ENCODE measurements at regions of chr18 and their contacts with region 1.

Region 1: GRCh38 chr18:59899298-59900221 is at the start of gene PMAIP1:
- DNase-seq: peak; percentile 81
- H3K4me3 ChIP-seq: peak within 1 kb of the TSS; percentile 87
- H3K27ac ChIP-seq: peak within 1 kb of the TSS; percentile 81
- H3K4me1 ChIP-seq: peaks cover 31% of the 10 kb centered on the region
- CTCF ChIP-seq: no peak
- total RNA-seq, gene PMAIP1: 22.9 and 25.4 TPM in 2 replicates

Region 2: DNA sequence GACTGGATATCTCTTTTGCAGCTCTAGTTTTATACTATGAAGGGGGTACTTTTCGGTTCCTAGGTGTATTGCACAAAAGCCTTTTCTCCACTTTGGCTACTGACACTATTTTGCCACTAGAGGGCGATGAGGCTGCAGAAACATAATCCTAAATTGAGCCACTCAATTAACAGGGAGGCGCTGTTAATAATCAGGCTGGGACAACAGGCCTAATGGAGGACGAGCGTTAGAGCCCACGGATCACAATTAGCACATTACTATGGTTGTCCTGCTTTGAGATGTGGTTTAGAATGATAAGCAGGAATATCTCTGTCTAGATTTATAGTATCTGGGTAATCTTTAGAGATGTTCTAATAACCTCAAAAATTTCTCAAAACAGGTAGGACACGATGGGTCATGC is 62.0 kb before region 1 on chr18:
- CTCF ChIA-PET with region 1: no interaction called
- POLR2A ChIA-PET with region 1: no interaction called
- intact Hi-C with region 1: loop called (anchors 2 kb)
- DNase-seq: peak; percentile 72
- H3K4me3 ChIP-seq: no peak overlapping the region
- H3K27ac ChIP-seq: no peak overlapping the region
- H3K4me1 ChIP-seq: peaks cover 5% of the 10 kb centered on the region
- CTCF ChIP-seq: peak; percentile 87

Region 3: DNA sequence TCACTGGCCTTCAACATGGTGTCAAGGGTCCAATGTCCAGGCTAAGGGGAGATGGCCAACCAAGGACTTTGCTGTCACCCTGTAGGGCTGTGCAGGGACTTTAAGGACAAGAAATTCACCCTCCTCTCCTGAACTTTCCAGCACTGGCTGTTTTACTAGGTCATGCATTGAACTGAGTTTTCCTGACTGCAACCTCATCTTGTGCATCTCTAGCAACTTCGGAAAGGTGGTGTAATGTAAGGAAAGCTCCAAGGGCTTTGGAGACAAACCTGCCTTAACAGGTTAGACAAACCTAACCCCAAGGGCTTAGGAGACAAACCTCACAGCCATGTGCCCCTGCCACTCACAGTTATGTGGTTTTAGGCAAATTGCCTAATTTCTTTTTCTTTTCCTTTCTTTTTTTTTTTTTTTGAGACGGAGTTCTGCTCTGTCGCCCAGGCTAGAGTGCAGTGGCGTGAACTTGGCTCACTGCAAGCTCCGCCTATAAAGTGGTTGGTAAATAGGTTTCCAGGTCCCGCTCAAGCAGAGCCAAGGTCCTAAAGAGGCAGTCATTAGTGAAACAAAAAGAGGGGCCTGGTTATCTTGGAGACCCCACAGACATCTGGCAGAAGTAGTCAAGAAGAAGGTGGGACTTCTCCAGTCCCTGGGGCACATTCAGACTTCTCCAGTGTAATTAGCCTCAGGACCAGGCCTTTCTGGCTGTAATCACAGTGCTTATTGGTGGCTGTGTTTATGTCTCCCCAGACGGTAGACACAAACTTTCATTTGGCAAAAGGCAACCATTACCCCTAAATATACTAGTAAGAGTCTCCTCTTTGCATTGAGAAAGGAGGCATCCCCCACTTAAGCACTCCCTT is 37.4 kb before region 1 on chr18:
- CTCF ChIA-PET with region 1: no interaction called
- POLR2A ChIA-PET with region 1: interaction called, 5 read pairs
- intact Hi-C with region 1: loop called (anchors 1 kb)
- DNase-seq: peak; percentile 76
- H3K4me3 ChIP-seq: peak overlapping the region; percentile 35
- H3K27ac ChIP-seq: peak overlapping the region; percentile 87
- H3K4me1 ChIP-seq: peaks cover 80% of the 10 kb centered on the region
- CTCF ChIP-seq: no peak

Region 4: GRCh38 chr18:59885579-59886163 is 13.9 kb before region 1 on chr18:
- CTCF ChIA-PET with region 1: no interaction called
- POLR2A ChIA-PET with region 1: interaction called, 22 read pairs
- intact Hi-C with region 1: no loop called
- DNase-seq: peak; percentile 62
- H3K4me3 ChIP-seq: peak overlapping the region; percentile 44
- H3K27ac ChIP-seq: peak overlapping the region; percentile 33
- H3K4me1 ChIP-seq: peaks cover 37% of the 10 kb centered on the region
- CTCF ChIP-seq: no peak

Region 5: DNA sequence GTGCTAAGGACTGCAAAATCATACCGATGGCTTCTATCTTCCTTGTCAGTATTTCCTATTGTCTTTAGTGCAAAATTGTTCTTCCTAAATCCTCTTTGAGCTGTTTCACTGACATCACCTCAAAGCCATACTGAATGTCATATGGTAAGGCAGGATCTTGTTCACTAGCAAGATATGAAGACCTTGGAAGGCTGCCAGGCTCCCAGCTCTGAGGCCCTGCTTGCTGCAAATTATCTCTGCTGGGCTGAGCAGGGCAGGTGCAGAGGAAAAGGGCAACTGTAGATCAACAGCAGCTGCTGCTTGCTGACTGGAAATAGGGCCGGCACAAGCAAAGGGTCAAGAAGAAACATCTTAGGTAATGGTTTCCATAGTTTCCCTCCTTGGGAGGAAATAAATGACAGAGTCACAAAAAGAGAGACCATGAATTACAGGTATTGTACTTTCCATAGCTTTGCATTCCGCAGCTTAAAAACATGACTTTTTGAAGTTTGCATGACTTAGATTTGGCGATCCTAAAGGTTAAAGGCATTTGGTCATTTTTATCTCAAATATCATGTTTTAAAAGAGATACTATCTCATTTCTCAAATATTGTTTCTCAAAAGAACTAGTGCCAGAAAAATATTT is 58.5 kb after region 1 on chr18:
- CTCF ChIA-PET with region 1: no interaction called
- POLR2A ChIA-PET with region 1: interaction called, 8 read pairs
- intact Hi-C with region 1: loop called (anchors 5 kb)
- DNase-seq: peak; percentile 79
- H3K4me3 ChIP-seq: no peak overlapping the region
- H3K27ac ChIP-seq: peak overlapping the region; percentile 67
- H3K4me1 ChIP-seq: peaks cover 64% of the 10 kb centered on the region
- CTCF ChIP-seq: no peak

Region 6: GRCh38 chr18:60452421-60452820 is 552.9 kb after region 1 on chr18:
- CTCF ChIA-PET with region 1: no interaction called
- POLR2A ChIA-PET with region 1: no interaction called
- intact Hi-C with region 1: no loop called
- DNase-seq: no peak
- H3K4me3 ChIP-seq: no peak overlapping the region
- H3K27ac ChIP-seq: no peak overlapping the region
- H3K4me1 ChIP-seq: no peaks in the 10 kb centered on the region
- CTCF ChIP-seq: no peak